Activated CD4-positive, alpha-beta T cell treated with anti-CD3 and anti-CD28 coated beads for 36 hours (primary cell): ENCODE measurements at regions of chr2 and their contacts with region 1.

Region 1: DNA sequence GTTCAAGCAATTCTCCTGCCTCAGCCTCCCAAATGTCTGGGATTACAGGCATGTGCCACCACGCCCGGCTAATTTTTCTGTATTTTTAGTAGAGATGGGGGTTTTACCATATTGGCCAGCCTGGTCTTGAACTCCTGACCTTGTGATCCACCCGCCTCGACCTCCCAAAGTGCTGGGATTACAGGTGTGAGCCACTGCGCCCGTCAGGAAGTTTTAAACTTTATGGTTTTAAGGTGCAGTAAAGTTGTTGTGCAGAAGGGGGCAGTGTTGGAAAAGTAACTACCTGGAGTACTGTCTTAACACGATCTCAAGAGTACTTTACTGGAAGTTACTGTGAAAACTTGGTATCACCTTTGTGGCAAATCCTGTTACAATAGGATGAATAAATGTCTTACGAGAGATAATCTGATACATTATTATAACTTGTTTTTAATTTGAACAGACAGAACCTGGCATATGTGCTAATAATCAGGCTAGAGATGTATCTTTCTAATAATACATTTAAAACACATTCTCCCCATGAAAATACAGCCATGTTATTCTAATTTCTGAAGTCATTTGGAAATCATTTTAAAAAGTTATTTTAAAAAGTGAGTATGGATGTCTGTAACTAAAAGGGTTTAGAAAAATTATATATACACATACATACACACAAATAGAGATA is 10.8 kb downstream of the SPDYA start:
- DNase-seq: peak; percentile 72
- ATAC-seq: peak; percentile 88
- H3K4me3 Mint-ChIP-seq: no peak overlapping the region
- H3K27ac Mint-ChIP-seq: no peak overlapping the region
- H3K4me1 Mint-ChIP-seq: peaks cover 7% of the 10 kb centered on the region
- H3K27me3 Mint-ChIP-seq: peaks cover 2% of the 10 kb centered on the region

Region 2: DNA sequence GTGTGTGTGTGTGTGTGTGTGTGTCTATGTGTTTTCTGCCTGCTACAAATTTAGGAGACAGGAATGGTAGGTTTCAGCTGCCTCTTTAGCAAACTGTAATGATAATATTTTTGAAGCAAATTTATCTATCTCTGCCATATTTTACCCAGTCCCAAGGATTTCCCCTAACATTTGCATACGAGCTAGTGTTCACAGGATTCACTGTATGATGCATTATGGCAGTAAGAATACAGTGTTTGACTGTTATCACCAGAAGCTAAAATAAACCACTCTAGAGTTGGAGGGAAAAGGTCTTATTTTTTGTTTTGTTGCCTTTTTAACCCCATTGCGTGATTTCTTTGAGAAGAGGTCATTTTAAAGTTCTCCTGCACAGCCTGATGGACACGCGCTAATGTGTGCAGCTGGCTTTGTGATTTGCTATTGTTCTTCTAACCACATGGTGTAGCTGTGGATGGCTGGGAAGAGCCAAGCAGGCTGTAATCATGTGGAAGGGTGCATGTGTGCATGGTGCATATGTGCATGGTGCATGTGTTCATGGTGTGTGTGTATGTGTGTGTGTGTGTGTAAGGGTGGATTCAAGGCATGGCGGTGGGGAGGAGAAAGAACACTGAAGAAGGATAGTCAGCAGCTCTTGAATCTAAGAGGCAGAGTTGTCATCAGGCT is 263.1 kb before region 1 on chr2:
- CTCF ChIA-PET with region 1: no interaction called
- POLR2A ChIA-PET with region 1: interaction called, 12 read pairs
- intact Hi-C with region 1: no loop called
- DNase-seq: no peak
- ATAC-seq: no peak
- H3K4me3 Mint-ChIP-seq: no peak overlapping the region
- H3K27ac Mint-ChIP-seq: no peak overlapping the region
- H3K4me1 Mint-ChIP-seq: no peaks in the 10 kb centered on the region
- H3K27me3 Mint-ChIP-seq: no peaks in the 10 kb centered on the region

Region 3: DNA sequence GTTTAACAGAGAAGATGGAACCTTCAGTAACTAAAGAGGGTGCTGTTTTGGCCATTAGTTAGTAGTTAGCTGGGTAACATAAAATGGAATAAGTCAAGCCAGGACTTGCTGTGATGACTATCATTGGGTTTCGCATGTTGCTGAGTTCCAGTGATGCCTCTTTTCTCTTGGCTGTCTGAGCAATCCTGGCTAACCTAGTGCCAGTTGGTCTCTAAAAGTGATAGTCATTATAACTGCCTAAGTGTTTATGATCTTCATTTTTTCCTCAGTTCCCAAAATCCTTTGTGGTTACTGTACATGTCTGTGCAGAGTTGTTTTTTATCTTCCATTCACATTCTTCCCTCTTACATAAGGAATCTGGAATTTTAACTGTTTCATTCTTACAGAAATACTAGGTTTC is 106.5 kb after region 1 on chr2:
- CTCF ChIA-PET with region 1: interaction called, 3 read pairs
- POLR2A ChIA-PET with region 1: no interaction called
- intact Hi-C with region 1: loop called in 1 of 2 experiments (anchors 10 kb)
- DNase-seq: no peak
- ATAC-seq: no peak
- H3K4me3 Mint-ChIP-seq: no peak overlapping the region
- H3K27ac Mint-ChIP-seq: peak overlapping the region; percentile 43
- H3K4me1 Mint-ChIP-seq: no peaks in the 10 kb centered on the region
- H3K27me3 Mint-ChIP-seq: no peaks in the 10 kb centered on the region

Region 4: DNA sequence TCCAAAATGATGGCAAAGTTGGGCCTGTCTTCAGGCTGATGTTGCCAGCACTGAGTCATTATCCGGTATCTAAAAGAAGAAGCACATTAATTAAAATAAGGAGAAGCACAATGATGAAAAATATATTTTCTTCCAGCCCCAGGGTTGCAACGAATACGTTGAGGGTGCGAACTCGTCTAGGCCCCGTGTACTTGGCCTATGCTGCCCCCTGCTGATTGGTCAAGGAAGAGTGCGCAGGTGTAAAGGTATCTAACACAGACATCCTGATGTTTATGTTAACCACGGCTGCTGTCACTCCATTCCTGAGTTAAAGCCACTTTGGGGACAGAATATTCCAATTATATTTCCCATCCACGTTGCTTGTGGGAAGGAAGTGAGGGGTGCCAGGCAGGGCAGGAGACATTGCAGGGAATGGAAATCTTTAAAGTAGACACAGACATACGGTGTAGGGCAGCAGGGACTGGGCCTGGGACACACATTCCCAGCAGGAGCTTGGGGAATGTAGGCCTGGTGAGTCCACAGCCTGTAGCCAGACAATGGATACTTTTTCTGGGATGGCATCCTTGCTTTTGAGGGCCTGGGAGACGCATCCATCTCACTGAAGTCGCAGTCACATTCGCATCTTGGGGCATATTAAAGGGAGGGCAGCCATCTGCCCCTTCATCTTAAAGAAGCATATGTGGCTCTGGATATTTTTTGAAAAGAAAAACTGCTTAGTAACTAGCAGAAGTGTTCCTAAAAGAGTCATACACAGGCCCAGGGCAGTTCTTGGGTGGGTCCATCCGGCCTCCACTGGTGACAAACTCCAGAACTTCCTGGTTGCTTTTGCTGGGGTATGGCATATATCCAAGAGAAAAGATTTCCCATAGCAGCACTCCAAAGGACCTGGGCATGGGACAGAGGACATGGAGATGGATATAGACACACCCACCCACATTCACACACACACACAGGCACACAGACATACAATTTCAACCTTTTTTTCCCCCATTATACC is 375.7 kb after region 1 on chr2:
- CTCF ChIA-PET with region 1: no interaction called
- POLR2A ChIA-PET with region 1: no interaction called
- intact Hi-C with region 1: loop called (anchors 1 kb)
- DNase-seq: peak; percentile 89
- ATAC-seq: peak; percentile 98
- H3K4me3 Mint-ChIP-seq: no peak overlapping the region
- H3K27ac Mint-ChIP-seq: no peak overlapping the region
- H3K4me1 Mint-ChIP-seq: peaks cover 3% of the 10 kb centered on the region
- H3K27me3 Mint-ChIP-seq: no peaks in the 10 kb centered on the region